ENCODE measurements at regions of chr7 and their contacts with region 1.

Region 1: GRCh38 chr7:150404805-150405583 is 25.9 kb downstream of the ZNF775 start:
- DNase-seq: peak; percentile 85
- H3K4me3 Mint-ChIP-seq: peak overlapping the region; percentile 86
- H3K27ac Mint-ChIP-seq: peak overlapping the region; percentile 86
- H3K4me1 Mint-ChIP-seq: peaks cover 35% of the 10 kb centered on the region
- H3K27me3 Mint-ChIP-seq: no peaks in the 10 kb centered on the region

Region 2: GRCh38 chr7:150356265-150356897 is 48.6 kb before region 1 on chr7:
- CTCF ChIA-PET with region 1: interaction called, 10 read pairs
- POLR2A ChIA-PET with region 1: interaction called, 6 read pairs
- intact Hi-C with region 1: loop called (anchors 1 kb)
- DNase-seq: no peak
- H3K4me3 Mint-ChIP-seq: no peak overlapping the region
- H3K27ac Mint-ChIP-seq: peak overlapping the region; percentile 33
- H3K4me1 Mint-ChIP-seq: peaks cover 36% of the 10 kb centered on the region
- H3K27me3 Mint-ChIP-seq: no peaks in the 10 kb centered on the region

Region 3: DNA sequence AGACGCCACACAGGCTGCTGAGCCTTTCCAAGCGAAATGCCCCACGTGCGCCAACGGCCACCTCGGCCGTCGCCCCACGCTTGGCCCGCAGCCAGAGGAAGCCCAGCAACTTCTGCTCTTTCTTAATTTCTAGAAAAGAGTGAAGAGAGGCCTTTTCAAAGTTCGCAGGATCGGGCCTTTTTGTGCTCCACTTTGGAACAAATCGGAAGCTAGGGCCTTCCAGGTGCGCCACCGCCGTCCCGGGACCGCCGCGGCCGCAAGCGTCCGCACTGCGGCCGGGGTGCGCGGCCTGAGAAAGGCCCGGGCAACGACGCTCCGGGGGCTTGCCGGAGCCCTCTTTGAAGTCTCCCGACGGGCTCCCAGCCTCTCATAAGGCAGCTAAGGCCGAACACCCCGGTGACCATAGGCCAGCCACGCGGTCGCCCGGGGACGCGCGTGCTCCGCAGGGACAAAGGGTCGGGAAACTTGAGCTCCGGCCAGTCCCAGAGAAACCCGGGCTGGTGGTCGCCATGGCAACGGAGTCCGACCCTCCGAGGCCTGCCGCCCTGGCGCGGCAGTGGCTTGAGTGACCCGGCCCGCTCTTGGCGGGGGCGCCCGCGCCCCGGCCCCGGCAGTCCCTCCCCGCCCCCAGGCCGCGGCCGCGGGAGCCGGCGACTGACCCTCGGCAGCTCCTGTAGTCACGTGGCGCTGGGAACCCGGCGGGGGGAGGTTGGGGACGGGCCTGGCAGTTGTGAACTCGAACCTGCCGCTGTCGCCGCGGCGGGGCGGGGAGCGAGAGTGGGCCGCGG is 36.7 kb before region 1 on chr7 and contains the start of gene REPIN1:
- CTCF ChIA-PET with region 1: interaction called, 11 read pairs
- POLR2A ChIA-PET with region 1: interaction called, 12 read pairs
- intact Hi-C with region 1: loop called (anchors 2 kb)
- DNase-seq: peak; percentile 88
- H3K4me3 Mint-ChIP-seq: peak within 1 kb of the TSS; percentile 95
- H3K27ac Mint-ChIP-seq: peak within 1 kb of the TSS; percentile 95
- H3K4me1 Mint-ChIP-seq: peaks cover 30% of the 10 kb centered on the region
- H3K27me3 Mint-ChIP-seq: no peaks in the 10 kb centered on the region
- total RNA-seq, gene REPIN1: 52.3 to 56.9 TPM

Region 4: GRCh38 chr7:150378853-150379440 is 26.0 kb before region 1 on chr7 and contains the start of gene ZNF775:
- CTCF ChIA-PET with region 1: interaction called, 9 read pairs
- POLR2A ChIA-PET with region 1: interaction called, 5 read pairs
- intact Hi-C with region 1: loop called (anchors 1 kb)
- DNase-seq: peak; percentile 95
- H3K4me3 Mint-ChIP-seq: peak within 1 kb of the TSS; percentile 81
- H3K27ac Mint-ChIP-seq: peak within 1 kb of the TSS; percentile 72
- H3K4me1 Mint-ChIP-seq: peaks cover 42% of the 10 kb centered on the region
- H3K27me3 Mint-ChIP-seq: no peaks in the 10 kb centered on the region
- total RNA-seq, gene ZNF775: 6.0 to 6.8 TPM

Region 5: GRCh38 chr7:150390205-150390604 is 14.8 kb before region 1 on chr7:
- CTCF ChIA-PET with region 1: interaction called, 7 read pairs
- POLR2A ChIA-PET with region 1: interaction called, 3 read pairs
- intact Hi-C with region 1: loop called (anchors 1 kb)
- DNase-seq: no peak
- H3K4me3 Mint-ChIP-seq: no peak overlapping the region
- H3K27ac Mint-ChIP-seq: no peak overlapping the region
- H3K4me1 Mint-ChIP-seq: peaks cover 16% of the 10 kb centered on the region
- H3K27me3 Mint-ChIP-seq: no peaks in the 10 kb centered on the region

Region 6: DNA sequence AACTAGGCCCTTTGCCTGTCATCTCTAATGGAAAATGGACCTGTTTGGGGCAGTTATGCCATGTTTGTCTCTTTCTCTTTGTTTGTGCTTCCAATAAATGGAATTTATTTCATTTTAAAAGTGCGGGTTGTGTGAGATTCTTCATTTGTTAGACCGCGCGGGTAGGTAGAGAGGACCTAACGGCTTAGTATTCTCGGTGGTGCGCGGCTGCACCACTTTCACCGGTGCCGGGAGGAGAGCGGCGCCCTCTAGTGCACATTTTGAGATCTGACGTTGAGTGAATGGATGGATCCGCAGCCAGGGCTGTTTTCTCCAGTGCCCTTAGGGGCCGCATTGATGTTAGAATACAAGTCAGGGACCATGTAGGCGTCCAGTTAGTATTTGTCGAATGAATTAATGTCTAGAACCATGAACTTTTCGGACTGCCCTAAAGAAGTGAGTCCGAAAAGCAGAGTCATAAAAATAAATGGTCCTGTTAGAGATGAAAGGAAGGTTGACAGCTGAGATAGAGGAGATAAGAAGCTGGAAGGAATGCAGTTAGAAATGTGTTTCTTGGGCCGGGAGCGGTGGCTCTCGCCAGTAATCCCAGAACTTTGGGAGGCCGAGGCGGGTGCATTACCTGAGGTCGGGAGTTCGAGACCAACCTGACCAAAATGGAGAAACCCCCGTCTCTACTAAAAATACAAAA is 16.1 kb after region 1 on chr7:
- CTCF ChIA-PET with region 1: interaction called, 11 read pairs
- POLR2A ChIA-PET with region 1: no interaction called
- intact Hi-C with region 1: loop called (anchors 1 kb)
- DNase-seq: peak; percentile 91
- H3K4me3 Mint-ChIP-seq: no peak overlapping the region
- H3K27ac Mint-ChIP-seq: no peak overlapping the region
- H3K4me1 Mint-ChIP-seq: peaks cover 5% of the 10 kb centered on the region
- H3K27me3 Mint-ChIP-seq: no peaks in the 10 kb centered on the region

Measured in activated CD4-positive, alpha-beta memory T cell treated with anti-CD3 and anti-CD28 coated beads for 36 hours (primary cell).